H1 (cell line): ENCODE measurements at regions of chr3 and their contacts with region 1.

Region 1: GRCh38 chr3:136196401-136197158 is 445 bp upstream of the MSL2 start:
- DNase-seq: peak; percentile 98
- H3K4me3 ChIP-seq: peak overlapping the region; percentile 93 to 98 (median 94)
- H3K27ac ChIP-seq: peak overlapping the region; percentile 97
- H3K4me1 ChIP-seq: peaks cover 0 to 4% (median 0%) of the 10 kb centered on the region in 4 experiments; a peak in 1 of 7 replicates
- H3K27me3 ChIP-seq: no peaks in the 10 kb centered on the region
- CTCF ChIP-seq: no peak
- EP300 ChIP-seq: no peak; a peak in 1 of 3 replicates
- POLR2A ChIP-seq: peak; percentile 76 to 90; a peak in 2 of 3 replicates
- RAD21 ChIP-seq: 0 out of 4 replicates have a peak, but pooled peaks of 1 of the 2 experiments have one; percentile 4

Region 2: GRCh38 chr3:136105044-136105443 is 91.5 kb before region 1 on chr3:
- CTCF ChIA-PET with region 1: no interaction called
- POLR2A ChIA-PET with region 1: no interaction called
- DNase-seq: no peak
- H3K4me3 ChIP-seq: no peak overlapping the region
- H3K27ac ChIP-seq: no peak overlapping the region
- H3K4me1 ChIP-seq: no peaks in the 10 kb centered on the region
- H3K27me3 ChIP-seq: 0 out of 7 replicates have a peak, but pooled peaks cover 0 to 2% (median 0%) of the 10 kb centered on the region in 4 experiments
- CTCF ChIP-seq: no peak
- EP300 ChIP-seq: no peak
- POLR2A ChIP-seq: no peak
- RAD21 ChIP-seq: no peak

Region 3: DNA sequence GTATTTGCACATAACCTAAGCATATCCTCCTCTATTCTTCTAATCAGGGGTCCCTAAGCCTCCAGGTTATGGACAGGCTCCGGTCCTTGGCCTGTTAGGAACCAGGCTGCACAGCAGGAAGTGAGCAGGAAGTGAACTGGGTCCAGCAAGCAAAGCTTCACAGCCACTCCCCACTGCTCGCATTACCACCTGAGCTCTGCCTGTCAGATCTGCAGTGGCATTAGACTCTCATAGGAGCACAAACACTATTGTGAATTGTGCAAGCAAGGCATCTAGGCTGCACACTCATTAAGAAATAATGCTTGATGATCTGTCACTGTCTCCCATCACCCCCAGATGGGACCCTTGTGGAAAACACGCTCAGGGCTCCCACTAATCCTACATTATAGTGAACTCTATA is 10.2 kb before region 1 on chr3:
- CTCF ChIA-PET with region 1: interaction called, 4 read pairs
- POLR2A ChIA-PET with region 1: interaction called, 86 read pairs
- DNase-seq: no peak
- H3K4me3 ChIP-seq: no peak overlapping the region
- H3K27ac ChIP-seq: no peak overlapping the region
- H3K4me1 ChIP-seq: peaks cover 0 to 11% (median 5%) of the 10 kb centered on the region in 4 experiments; a peak in 4 of 7 replicates
- H3K27me3 ChIP-seq: no peaks in the 10 kb centered on the region
- CTCF ChIP-seq: no peak
- EP300 ChIP-seq: no peak
- POLR2A ChIP-seq: no peak
- RAD21 ChIP-seq: no peak

Region 4: DNA sequence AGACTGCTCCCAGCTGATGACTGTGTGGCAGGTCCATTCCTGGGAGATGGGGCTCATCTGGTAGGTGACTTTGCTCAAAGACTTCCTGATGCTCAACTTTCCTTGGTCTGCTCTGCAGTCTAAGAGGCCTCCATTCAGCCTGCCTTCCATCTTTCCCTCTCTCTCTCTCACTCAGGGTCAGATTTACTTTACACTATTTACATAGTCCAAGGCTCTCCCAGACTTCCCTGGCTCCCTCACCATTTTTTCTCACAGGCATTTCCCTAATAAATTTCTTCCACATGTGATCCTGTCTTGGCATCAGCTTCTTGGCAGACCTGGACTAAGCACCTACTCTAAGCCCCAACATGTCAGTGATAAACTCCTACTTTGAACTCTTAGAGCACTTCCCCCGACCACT is 40.5 kb after region 1 on chr3:
- CTCF ChIA-PET with region 1: no interaction called
- POLR2A ChIA-PET with region 1: interaction called, 10 read pairs
- DNase-seq: no peak
- H3K4me3 ChIP-seq: no peak overlapping the region
- H3K27ac ChIP-seq: no peak overlapping the region
- H3K4me1 ChIP-seq: peaks cover 0 to 6% (median 3%) of the 10 kb centered on the region in 4 experiments; a peak in 4 of 7 replicates
- H3K27me3 ChIP-seq: peaks cover 0 to 17% (median 3%) of the 10 kb centered on the region in 4 experiments; a peak in 5 of 7 replicates
- CTCF ChIP-seq: no peak
- EP300 ChIP-seq: no peak
- POLR2A ChIP-seq: no peak
- RAD21 ChIP-seq: no peak

Region 5: GRCh38 chr3:136250226-136250902 is 53.8 kb after region 1 on chr3 and contains the start of gene PCCB:
- CTCF ChIA-PET with region 1: interaction called, 3 read pairs
- POLR2A ChIA-PET with region 1: interaction called, 77 read pairs
- DNase-seq: peak; percentile 89 to 94
- H3K4me3 ChIP-seq: peak within 1 kb of the TSS; percentile 59 to 90 (median 72)
- H3K27ac ChIP-seq: peak within 1 kb of the TSS; percentile 93
- H3K4me1 ChIP-seq: peaks cover 0 to 9% (median 5%) of the 10 kb centered on the region in 4 experiments; a peak in 5 of 7 replicates
- H3K27me3 ChIP-seq: no peaks in the 10 kb centered on the region
- CTCF ChIP-seq: peak; percentile 71 to 86 (median 79)
- EP300 ChIP-seq: no peak
- POLR2A ChIP-seq: peak; percentile 89 to 95
- RAD21 ChIP-seq: peak; percentile 44 to 53
- total RNA-seq, gene PCCB: 56.7 and 60.2 TPM in 2 replicates